GM12878 (cell line): ENCODE measurements at regions of chr15 and their contacts with region 1.

Region 1: GRCh38 chr15:33309602-33310276 is 1.0 kb upstream of the RYR3 start:
- DNase-seq: no peak
- ATAC-seq: peak; percentile 76
- H3K4me3 ChIP-seq: no peak overlapping the region
- H3K27ac ChIP-seq: no peak overlapping the region
- H3K4me1 ChIP-seq: no peaks in the 10 kb centered on the region
- H3K27me3 ChIP-seq: peaks cover 0 to 8% of the 10 kb centered on the region in 2 experiments
- CTCF ChIP-seq: peak; percentile 15 to 44 (median 29); a peak in 4 of 6 replicates
- EP300 ChIP-seq: no peak
- POLR2A ChIP-seq: no peak
- RAD21 ChIP-seq: no peak

Region 2: DNA sequence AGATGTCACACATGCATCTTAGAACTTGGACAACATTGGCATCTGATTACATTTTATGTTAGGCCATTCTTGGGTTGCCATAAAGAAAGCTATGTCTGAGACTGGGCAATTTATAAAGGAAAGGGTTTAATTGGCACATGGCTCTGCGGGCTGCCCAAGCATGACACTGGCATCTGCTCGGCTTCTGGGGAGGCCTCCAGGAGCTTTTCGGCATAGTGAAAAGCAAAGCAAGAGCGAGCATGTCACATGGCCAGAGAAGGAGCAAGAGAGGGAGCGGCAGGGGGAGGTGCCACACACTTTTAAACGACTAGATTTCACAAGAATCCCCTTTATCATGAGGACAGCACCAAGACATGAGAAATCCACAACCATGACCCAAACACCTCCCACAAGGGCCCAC is 12.4 kb after region 1 on chr15:
- CTCF ChIA-PET with region 1: interaction called, 16 read pairs
- POLR2A ChIA-PET with region 1: no interaction called
- RAD21 ChIA-PET with region 1: interaction called, 8 read pairs
- SMC1A ChIA-PET with region 1: interaction called, 6 read pairs
- in situ Hi-C with region 1: no loop called
- intact Hi-C with region 1: no loop called
- DNase-seq: no peak
- ATAC-seq: no peak
- H3K4me3 ChIP-seq: no peak overlapping the region
- H3K27ac ChIP-seq: no peak overlapping the region
- H3K4me1 ChIP-seq: peaks cover 4% of the 10 kb centered on the region; the same call in 1 of the 2 replicates
- H3K27me3 ChIP-seq: peaks cover 0 to 5% of the 10 kb centered on the region in 2 experiments; a peak in 3 of 4 replicates
- CTCF ChIP-seq: no peak
- EP300 ChIP-seq: no peak
- POLR2A ChIP-seq: no peak
- RAD21 ChIP-seq: no peak

Region 3: GRCh38 chr15:33675246-33675645 is 365.5 kb after region 1 on chr15:
- CTCF ChIA-PET with region 1: interaction called, 20 read pairs
- POLR2A ChIA-PET with region 1: no interaction called
- RAD21 ChIA-PET with region 1: interaction called, 3 read pairs
- SMC1A ChIA-PET with region 1: interaction called, 8 read pairs
- in situ Hi-C with region 1: no loop called
- intact Hi-C with region 1: loop called (anchors 2 kb)
- DNase-seq: no peak
- ATAC-seq: peak; percentile 81
- H3K4me3 ChIP-seq: no peak overlapping the region
- H3K27ac ChIP-seq: no peak overlapping the region
- H3K4me1 ChIP-seq: peaks cover 14% of the 10 kb centered on the region; the same call in 1 of the 2 replicates
- H3K27me3 ChIP-seq: no peaks in the 10 kb centered on the region; a peak in 3 of 4 replicates
- CTCF ChIP-seq: peak; percentile 54 to 63 (median 56)
- EP300 ChIP-seq: no peak
- POLR2A ChIP-seq: no peak
- RAD21 ChIP-seq: peak; percentile 66